ENCODE measurements at regions of chr14 and their contacts with region 1.

Region 1: DNA sequence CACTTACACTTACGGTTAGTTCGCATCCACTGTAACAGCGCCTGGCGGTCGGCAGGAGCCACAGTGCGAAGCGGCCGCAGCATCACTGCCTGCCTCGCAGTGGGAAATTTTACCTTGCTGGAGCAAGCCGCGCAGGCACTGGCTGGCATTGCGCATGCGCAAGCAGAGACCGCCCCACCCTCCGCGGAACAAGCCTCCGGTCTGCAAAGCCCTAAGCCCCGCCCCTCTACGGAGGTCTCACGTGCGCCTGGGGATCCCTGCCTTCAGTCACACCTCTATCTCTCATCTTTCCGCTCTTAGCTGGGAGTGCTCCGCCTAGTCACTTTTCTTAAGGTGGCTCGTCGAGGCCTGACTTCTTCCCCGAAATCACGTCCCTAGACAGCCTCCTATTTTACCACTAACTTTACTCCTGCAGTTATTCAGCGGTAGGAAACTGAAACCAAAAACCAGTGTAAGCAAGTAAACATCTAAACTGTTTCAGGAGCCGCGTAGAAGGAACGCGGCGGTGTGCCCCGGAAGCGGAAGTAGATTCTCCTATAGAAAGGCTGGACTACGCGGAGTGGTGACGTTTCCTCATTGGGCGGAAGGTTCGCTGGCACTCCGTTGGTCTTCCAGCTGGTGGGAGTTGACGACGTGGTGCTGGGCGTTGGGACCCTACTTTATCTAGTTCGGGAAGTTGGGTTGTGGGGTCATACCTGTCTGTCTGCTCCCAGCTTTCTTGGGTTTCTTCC is at the start of gene SRP54:
- DNase-seq: peak; percentile 100
- ATAC-seq: peak; percentile 93
- H3K4me3 Mint-ChIP-seq: no peak within 1 kb of the TSS
- H3K27ac Mint-ChIP-seq: no peak within 1 kb of the TSS
- H3K4me1 Mint-ChIP-seq: peaks cover 4% of the 10 kb centered on the region
- H3K27me3 Mint-ChIP-seq: 0 out of 2 replicates have a peak, but pooled peaks cover 4% of the 10 kb centered on the region
- CTCF ChIP-seq: no peak
- total RNA-seq, gene SRP54: 54.0 to 57.0 TPM (median 55.1 TPM) in 3 replicates

Region 2: DNA sequence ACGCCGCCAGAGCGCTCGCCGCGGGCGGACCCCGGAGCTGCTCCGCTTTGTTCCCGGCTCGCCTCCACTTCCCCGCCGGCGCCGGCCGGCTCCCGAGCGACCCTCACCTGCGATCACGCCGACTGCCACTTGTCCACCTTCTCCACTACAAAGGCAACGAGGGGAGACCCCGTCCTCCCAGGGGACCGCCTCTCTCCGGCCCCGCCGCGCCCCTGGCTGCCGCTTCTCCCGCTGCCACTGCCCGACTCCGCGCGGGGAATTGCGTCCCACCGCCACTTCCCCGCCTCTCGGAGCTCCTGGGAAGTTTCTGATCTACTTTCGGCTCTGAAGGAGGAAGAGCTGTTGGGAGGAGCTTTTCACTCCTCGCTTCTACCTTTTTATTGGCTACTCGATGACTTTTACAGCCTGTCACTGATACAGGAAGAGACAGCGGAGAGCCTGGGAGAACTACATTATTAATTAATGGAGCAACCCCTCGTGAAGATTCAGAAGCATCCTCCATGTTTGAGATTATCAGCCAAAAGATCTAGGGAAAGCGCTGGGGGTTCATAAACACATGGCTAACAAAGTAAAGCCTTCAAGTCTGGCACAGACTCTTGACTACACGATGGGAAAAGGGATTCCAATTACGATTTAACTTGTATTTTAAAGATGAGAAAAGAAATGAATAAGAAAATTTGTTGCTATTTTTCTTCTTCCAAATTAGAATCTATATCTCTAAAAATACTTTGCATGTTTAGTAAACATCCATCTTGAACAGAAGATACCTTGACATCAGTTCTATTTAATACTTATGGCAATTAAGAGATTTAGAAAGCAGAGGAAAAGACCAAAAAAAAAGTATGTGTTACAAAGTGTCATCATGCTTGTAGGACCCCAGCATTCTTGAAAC is 107.3 kb before region 1 on chr14 and contains the start of gene BAZ1A:
- CTCF ChIA-PET with region 1: interaction called, 4 read pairs
- POLR2A ChIA-PET with region 1: interaction called, 14 read pairs
- DNase-seq: no peak
- ATAC-seq: peak; percentile 60
- H3K4me3 Mint-ChIP-seq: peak within 1 kb of the TSS; percentile 98
- H3K27ac Mint-ChIP-seq: peak within 1 kb of the TSS; percentile 98
- H3K4me1 Mint-ChIP-seq: peaks cover 30% of the 10 kb centered on the region
- H3K27me3 Mint-ChIP-seq: 0 out of 2 replicates have a peak, but pooled peaks cover 3% of the 10 kb centered on the region
- CTCF ChIP-seq: no peak
- total RNA-seq, gene BAZ1A: 17.1 to 28.2 TPM (median 21.2 TPM) in 3 replicates

Region 3: GRCh38 chr14:35046048-35046741 is 63.6 kb after region 1 on chr14 and contains the start of gene FAM177A1:
- CTCF ChIA-PET with region 1: interaction called, 5 read pairs
- POLR2A ChIA-PET with region 1: interaction called, 24 read pairs
- DNase-seq: peak; percentile 98
- ATAC-seq: peak; percentile 98
- H3K4me3 Mint-ChIP-seq: peak within 1 kb of the TSS; percentile 89
- H3K27ac Mint-ChIP-seq: peak within 1 kb of the TSS; percentile 98
- H3K4me1 Mint-ChIP-seq: peaks cover 20% of the 10 kb centered on the region
- H3K27me3 Mint-ChIP-seq: no peaks in the 10 kb centered on the region; the same call in 1 of the 2 replicates
- CTCF ChIP-seq: no peak
- total RNA-seq, gene FAM177A1: 36.8 to 44.7 TPM (median 44.3 TPM) in 3 replicates